Esophagus squamous epithelium (tissue), 5 donors: ENCODE measurements at regions of chr6 and their contacts with region 1.

Region 1: DNA sequence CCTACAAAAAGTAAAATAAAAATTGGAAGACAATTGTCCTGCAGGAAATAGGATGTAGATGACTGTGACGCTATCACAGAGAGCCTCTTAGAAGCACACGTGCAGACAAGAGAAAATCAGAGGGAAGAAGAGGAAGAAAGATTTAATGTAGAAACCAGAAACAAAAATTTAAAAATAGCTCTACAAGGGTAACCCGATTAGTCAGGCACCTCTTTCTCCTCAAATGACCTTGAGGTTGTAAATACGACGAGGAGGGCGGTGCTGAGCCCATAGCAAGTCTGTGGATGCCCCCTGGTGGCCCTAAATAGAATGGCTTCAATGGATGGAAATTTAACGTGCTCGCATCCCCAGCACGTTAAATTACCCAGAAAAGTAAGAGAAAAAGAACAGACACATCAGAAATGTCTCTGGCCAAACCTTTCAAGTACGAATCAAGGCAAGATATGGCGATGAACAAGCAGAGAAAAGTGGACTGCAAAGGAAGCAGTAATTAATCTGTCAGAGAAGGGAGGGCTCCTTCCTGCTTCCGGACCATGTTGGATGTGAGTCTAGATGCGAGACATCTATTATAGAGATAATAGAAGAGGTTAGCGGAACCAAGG is 4.2 kb upstream of the PRPH2 start:
- DNase-seq: peak; percentile 20
- H3K4me3 ChIP-seq: peak overlapping the region; percentile 24 to 61 (median 53)
- H3K27ac ChIP-seq: peak overlapping the region; percentile 62 to 89 (median 86)
- H3K4me1 ChIP-seq: peaks cover 7 to 25% (median 15%) of the 10 kb centered on the region in 3 donors
- H3K27me3 ChIP-seq: no peaks in the 10 kb centered on the region
- CTCF ChIP-seq: peak; percentile 84 to 97 (median 94)
- POLR2A ChIP-seq: no peak

Region 2: GRCh38 chr6:42086046-42087035 is 640.2 kb before region 1 on chr6:
- intact Hi-C with region 1: no loop called
- DNase-seq: no peak
- H3K4me3 ChIP-seq: no peak overlapping the region
- H3K27ac ChIP-seq: peak overlapping the region in 1 of 4 donors; percentile 30
- H3K4me1 ChIP-seq: peaks cover 0 to 10% (median 0%) of the 10 kb centered on the region in 3 donors
- H3K27me3 ChIP-seq: no peaks in the 10 kb centered on the region
- CTCF ChIP-seq: peak in 3 of 6 experiments; percentile 21 to 50 (median 24)
- POLR2A ChIP-seq: no peak

Region 3: GRCh38 chr6:42661540-42662153 is 64.9 kb before region 1 on chr6:
- intact Hi-C with region 1: loop called (anchors 5 kb)
- DNase-seq: peak; percentile 13
- H3K4me3 ChIP-seq: no peak overlapping the region
- H3K27ac ChIP-seq: no peak overlapping the region
- H3K4me1 ChIP-seq: no peaks in the 10 kb centered on the region
- H3K27me3 ChIP-seq: no peaks in the 10 kb centered on the region
- CTCF ChIP-seq: peak; percentile 70 to 93 (median 90)
- POLR2A ChIP-seq: no peak

Region 4: GRCh38 chr6:42692137-42692911 is 34.3 kb before region 1 on chr6:
- intact Hi-C with region 1: no loop called
- DNase-seq: no peak
- H3K4me3 ChIP-seq: no peak overlapping the region
- H3K27ac ChIP-seq: peak overlapping the region in 3 of 4 donors; percentile 3 to 65 (median 52)
- H3K4me1 ChIP-seq: peaks cover 7 to 20% (median 8%) of the 10 kb centered on the region in 3 donors
- H3K27me3 ChIP-seq: no peaks in the 10 kb centered on the region
- CTCF ChIP-seq: no peak
- POLR2A ChIP-seq: no peak